A549 (cell line): ENCODE measurements at regions of chr19 and their contacts with region 1.

Region 1: GRCh38 chr19:49676690-49677231 is 310 bp upstream of the PRMT1 start:
- DNase-seq: peak; percentile 100
- ATAC-seq: peak; percentile 58 to 81
- H3K4me3 ChIP-seq: peak overlapping the region; percentile 82
- H3K27ac ChIP-seq: peak overlapping the region; percentile 97 to 99
- H3K4me1 ChIP-seq: peaks cover 38% of the 10 kb centered on the region
- CTCF ChIP-seq: no peak
- EP300 ChIP-seq: no peak
- POLR2A ChIP-seq: no peak
- RAD21 ChIP-seq: no peak

Region 2: GRCh38 chr19:49580264-49581006 is 96.3 kb before region 1 on chr19 and contains the start of gene NOSIP:
- CTCF ChIA-PET with region 1: interaction called, 10 read pairs
- POLR2A ChIA-PET with region 1: interaction called, 5 read pairs
- DNase-seq: peak; percentile 94 to 99
- ATAC-seq: peak; percentile 98 to 99
- H3K4me3 ChIP-seq: peak within 1 kb of the TSS; percentile 63
- H3K27ac ChIP-seq: peak within 1 kb of the TSS; percentile 68 to 88
- H3K4me1 ChIP-seq: peaks cover 8% of the 10 kb centered on the region; the same call in 2 of the 3 replicates
- CTCF ChIP-seq: no peak
- EP300 ChIP-seq: no peak
- POLR2A ChIP-seq: peak; percentile 99
- RAD21 ChIP-seq: 0 out of 5 replicates have a peak, but pooled peaks of 1 of the 2 experiments have one; percentile 4
- polyA plus RNA-seq, gene NOSIP: 49.0 and 52.5 TPM in 2 replicates

Region 3: GRCh38 chr19:49614096-49614833 is 62.5 kb before region 1 on chr19:
- CTCF ChIA-PET with region 1: interaction called, 15 read pairs
- POLR2A ChIA-PET with region 1: interaction called, 3 read pairs
- DNase-seq: peak; percentile 71 to 78
- ATAC-seq: peak; percentile 85 to 89
- H3K4me3 ChIP-seq: no peak overlapping the region
- H3K27ac ChIP-seq: peak overlapping the region; percentile 65 to 84; a peak in 5 of 6 replicates
- H3K4me1 ChIP-seq: peaks cover 34% of the 10 kb centered on the region
- CTCF ChIP-seq: peak; percentile 17; the same call in 1 of the 3 replicates
- EP300 ChIP-seq: no peak
- POLR2A ChIP-seq: no peak
- RAD21 ChIP-seq: no peak

Region 4: GRCh38 chr19:49646486-49646985 is 30.2 kb before region 1 on chr19:
- CTCF ChIA-PET with region 1: interaction called, 134 read pairs
- POLR2A ChIA-PET with region 1: interaction called, 34 read pairs
- DNase-seq: no peak
- ATAC-seq: no peak
- H3K4me3 ChIP-seq: no peak overlapping the region
- H3K27ac ChIP-seq: no peak overlapping the region
- H3K4me1 ChIP-seq: peaks cover 17% of the 10 kb centered on the region
- CTCF ChIP-seq: no peak
- EP300 ChIP-seq: no peak
- POLR2A ChIP-seq: no peak
- RAD21 ChIP-seq: no peak

Region 5: DNA sequence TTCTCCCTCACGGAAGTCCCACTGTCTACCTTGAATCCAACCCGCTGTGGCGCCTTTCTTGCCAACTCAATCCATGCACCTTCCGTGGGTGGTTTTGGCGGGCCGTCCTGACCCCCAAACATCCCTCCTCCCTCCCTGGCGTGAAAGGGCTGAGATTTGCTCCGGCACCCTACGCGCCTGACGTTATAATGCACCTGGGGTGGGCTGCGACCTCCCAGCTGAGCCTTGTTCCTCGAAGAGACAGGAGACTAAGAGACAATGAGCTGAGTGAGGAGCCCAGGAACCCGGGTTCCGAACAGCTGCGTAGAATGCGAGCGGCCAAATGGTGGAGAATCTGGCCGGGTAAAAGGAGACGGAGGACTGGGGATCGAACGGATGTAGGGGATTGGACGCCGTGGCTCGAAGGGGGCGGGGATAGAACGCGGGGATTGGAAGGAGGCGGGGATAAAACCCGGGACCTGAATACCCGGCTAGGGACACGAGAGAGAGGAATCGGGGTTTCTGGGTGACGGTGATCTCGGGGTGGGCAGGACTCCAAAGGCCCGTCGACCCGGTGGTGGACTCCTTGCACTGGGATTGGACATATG is 14.0 kb after region 1 on chr19 and contains the start of gene CPT1C:
- CTCF ChIA-PET with region 1: interaction called, 16 read pairs
- POLR2A ChIA-PET with region 1: interaction called, 13 read pairs
- DNase-seq: no peak
- ATAC-seq: peak; percentile 3; a peak in 1 of 6 replicates
- H3K4me3 ChIP-seq: no peak within 1 kb of the TSS
- H3K27ac ChIP-seq: no peak within 1 kb of the TSS
- H3K4me1 ChIP-seq: 0 out of 3 replicates have a peak, but pooled peaks cover 9% of the 10 kb centered on the region
- CTCF ChIP-seq: no peak
- EP300 ChIP-seq: no peak
- POLR2A ChIP-seq: no peak
- RAD21 ChIP-seq: no peak
- polyA plus RNA-seq, gene CPT1C: 8.2 and 8.5 TPM in 2 replicates

Region 6: GRCh38 chr19:49766007-49766937 is 89.5 kb after region 1 on chr19:
- CTCF ChIA-PET with region 1: interaction called, 4 read pairs
- POLR2A ChIA-PET with region 1: interaction called, 15 read pairs
- DNase-seq: peak; percentile 100
- ATAC-seq: peak; percentile 91 to 95
- H3K4me3 ChIP-seq: peak overlapping the region; percentile 90
- H3K27ac ChIP-seq: peak overlapping the region; percentile 93 to 95
- H3K4me1 ChIP-seq: peaks cover 21% of the 10 kb centered on the region
- CTCF ChIP-seq: no peak
- EP300 ChIP-seq: no peak
- POLR2A ChIP-seq: peak; percentile 84
- RAD21 ChIP-seq: no peak